GM13977 (cell line): ENCODE measurements at regions of chr1 and their contacts with region 1.

Region 1: GRCh38 chr1:117664314-117664713 is 58.5 kb downstream of the TENT5C start:
- DNase-seq: peak; percentile 84
- CTCF ChIP-seq: no peak

Region 2: GRCh38 chr1:117257291-117257690 is 407.0 kb before region 1 on chr1:
- in situ Hi-C with region 1: no loop called
- DNase-seq: no peak
- CTCF ChIP-seq: no peak

Region 3: GRCh38 chr1:117473063-117473462 is 191.3 kb before region 1 on chr1:
- in situ Hi-C with region 1: no loop called
- DNase-seq: no peak
- CTCF ChIP-seq: no peak

Region 4: GRCh38 chr1:117541003-117541402 is 123.3 kb before region 1 on chr1:
- in situ Hi-C with region 1: loop called (anchors 10 kb)
- DNase-seq: no peak
- CTCF ChIP-seq: no peak

Region 5: DNA sequence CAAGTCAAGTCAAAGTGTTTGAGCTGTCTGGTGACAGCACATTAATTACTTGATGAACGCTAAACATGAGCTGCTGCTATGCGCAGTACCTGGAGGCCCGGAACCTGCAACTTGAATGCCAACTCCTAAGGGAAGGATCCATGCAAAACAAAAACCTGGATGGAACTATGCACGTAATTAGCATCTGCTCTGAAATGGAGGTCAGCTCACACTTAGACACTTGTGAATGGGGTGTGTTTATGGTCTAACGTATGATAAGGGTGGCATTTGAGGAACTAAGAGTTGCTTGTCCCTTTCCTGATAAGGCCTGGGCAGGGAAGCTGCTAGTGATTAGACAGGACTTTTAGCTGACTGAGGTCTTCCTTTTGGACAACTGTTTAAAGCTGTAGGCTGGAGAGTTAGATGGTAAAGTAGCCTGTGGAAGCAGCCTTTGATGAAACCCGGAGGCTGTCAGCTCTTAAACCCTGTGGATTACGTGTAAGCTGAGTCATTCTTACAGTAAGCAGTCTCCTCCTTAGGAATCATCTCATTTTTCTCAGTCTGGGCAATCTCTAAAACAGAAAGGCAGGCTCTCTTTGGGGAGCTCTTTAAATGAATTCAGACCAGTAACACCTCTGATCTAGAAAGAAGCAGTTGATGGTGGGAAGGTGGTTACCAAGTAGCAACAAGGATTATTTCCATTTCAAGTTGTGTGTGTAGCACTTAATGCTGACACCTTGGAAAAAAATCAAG is 51.6 kb before region 1 on chr1:
- in situ Hi-C with region 1: loop called (anchors 10 kb)
- DNase-seq: no peak
- CTCF ChIP-seq: no peak